ENCODE measurements at regions of chr2 and their contacts with region 1.

Region 1: GRCh38 chr2:46062637-46063412 is 234.4 kb upstream of the EPAS1 start:
- DNase-seq: peak; percentile 84
- H3K4me3 Mint-ChIP-seq: no peak overlapping the region
- H3K27ac Mint-ChIP-seq: no peak overlapping the region
- H3K4me1 Mint-ChIP-seq: peaks cover 18% of the 10 kb centered on the region
- H3K27me3 Mint-ChIP-seq: no peaks in the 10 kb centered on the region
- CTCF ChIP-seq: peak; percentile 75

Region 2: DNA sequence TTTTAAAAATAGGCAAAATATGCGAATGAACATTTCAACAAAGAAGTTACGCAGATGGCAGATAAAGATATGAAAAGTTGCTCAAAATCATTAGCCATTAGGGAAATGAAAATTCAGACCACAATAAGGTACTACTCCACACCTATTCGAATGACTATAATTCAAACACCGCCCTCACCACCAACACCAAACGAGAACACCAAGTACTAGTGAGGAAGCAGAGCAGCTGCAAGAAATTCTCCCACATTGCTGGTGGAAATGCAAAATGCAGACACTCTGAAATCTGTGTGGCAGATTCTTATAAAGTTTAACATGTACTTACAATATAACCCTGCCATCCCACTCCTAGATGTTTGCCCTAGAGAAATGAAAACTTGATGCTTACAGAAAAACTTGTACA is 428.6 kb before region 1 on chr2:
- CTCF ChIA-PET with region 1: no interaction called
- POLR2A ChIA-PET with region 1: no interaction called
- intact Hi-C with region 1: no loop called
- DNase-seq: no peak
- H3K4me3 Mint-ChIP-seq: no peak overlapping the region
- H3K27ac Mint-ChIP-seq: no peak overlapping the region
- H3K4me1 Mint-ChIP-seq: peaks cover 7% of the 10 kb centered on the region
- H3K27me3 Mint-ChIP-seq: no peaks in the 10 kb centered on the region
- CTCF ChIP-seq: no peak

Region 3: DNA sequence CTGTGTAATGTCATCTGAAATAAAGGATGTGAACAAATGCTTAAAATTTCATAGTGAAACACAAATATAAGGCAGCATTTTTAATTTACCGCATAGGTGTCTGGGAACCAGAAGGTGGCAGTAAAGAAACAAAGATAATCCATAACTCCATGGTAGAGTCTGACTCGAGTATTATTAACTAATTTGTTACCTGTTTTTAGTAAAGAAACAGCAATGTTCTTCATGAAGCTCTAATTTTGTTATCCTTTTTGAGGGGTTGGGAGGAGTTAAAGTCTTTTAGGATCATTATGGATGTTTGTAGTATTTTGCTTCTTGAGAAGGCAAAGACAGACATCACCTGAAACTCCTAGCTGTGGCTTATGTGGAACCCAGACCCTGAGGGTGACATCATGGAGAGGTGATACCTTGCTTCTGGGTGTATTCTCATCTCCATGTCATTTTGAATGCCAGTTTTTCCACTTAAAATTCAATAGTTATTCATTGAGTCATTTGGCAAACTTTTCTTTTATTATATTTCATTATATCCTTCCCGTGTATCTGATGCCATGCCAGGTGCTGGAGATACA is 51.8 kb before region 1 on chr2:
- CTCF ChIA-PET with region 1: interaction called, 8 read pairs
- POLR2A ChIA-PET with region 1: no interaction called
- intact Hi-C with region 1: loop called (anchors 5 kb)
- DNase-seq: peak; percentile 50
- H3K4me3 Mint-ChIP-seq: no peak overlapping the region
- H3K27ac Mint-ChIP-seq: no peak overlapping the region
- H3K4me1 Mint-ChIP-seq: no peaks in the 10 kb centered on the region
- H3K27me3 Mint-ChIP-seq: no peaks in the 10 kb centered on the region
- CTCF ChIP-seq: peak; percentile 54

Region 4: GRCh38 chr2:46073540-46074018 is 10.8 kb after region 1 on chr2:
- CTCF ChIA-PET with region 1: interaction called, 28 read pairs
- POLR2A ChIA-PET with region 1: no interaction called
- intact Hi-C with region 1: no loop called
- DNase-seq: peak; percentile 77
- H3K4me3 Mint-ChIP-seq: no peak overlapping the region
- H3K27ac Mint-ChIP-seq: peak overlapping the region; percentile 35
- H3K4me1 Mint-ChIP-seq: peaks cover 19% of the 10 kb centered on the region
- H3K27me3 Mint-ChIP-seq: no peaks in the 10 kb centered on the region
- CTCF ChIP-seq: no peak

Region 5: DNA sequence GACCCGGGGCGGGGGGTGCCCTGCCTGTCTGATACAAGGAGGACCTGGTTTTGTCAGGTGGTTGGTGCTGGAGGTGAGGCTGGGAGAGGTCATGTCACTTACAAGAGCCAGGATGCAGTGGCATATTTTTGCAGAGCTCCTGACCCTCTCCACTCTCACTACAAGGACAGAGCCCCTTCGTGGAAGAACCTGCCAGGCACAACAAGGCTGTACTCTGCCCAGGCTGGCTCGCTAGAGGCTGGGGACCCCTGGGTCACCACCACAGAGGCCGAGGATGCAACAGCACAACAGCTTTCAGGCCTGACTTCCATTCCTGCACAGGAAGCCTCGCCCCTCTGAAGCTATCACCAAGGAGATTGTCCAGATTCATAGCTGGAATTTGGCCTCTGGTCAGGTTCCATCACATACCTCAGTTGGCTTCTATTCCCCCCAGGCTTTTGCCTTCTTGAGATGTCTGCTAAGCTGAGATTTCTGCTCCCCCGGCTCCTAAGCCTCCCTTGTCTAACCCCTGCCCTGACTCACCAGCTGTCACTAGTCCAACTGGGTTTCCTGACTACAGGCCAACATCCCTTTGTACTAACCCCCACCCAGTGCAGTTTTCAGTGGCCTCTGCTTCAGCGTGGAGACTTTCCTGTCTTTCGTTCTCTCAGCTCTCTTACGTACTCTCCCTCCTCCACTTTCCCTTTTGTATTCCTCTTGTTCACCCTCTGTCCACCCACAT is 101.9 kb after region 1 on chr2:
- CTCF ChIA-PET with region 1: interaction called, 13 read pairs
- POLR2A ChIA-PET with region 1: interaction called, 4 read pairs
- intact Hi-C with region 1: no loop called
- DNase-seq: peak; percentile 94
- H3K4me3 Mint-ChIP-seq: no peak overlapping the region
- H3K27ac Mint-ChIP-seq: peak overlapping the region; percentile 32
- H3K4me1 Mint-ChIP-seq: peaks cover 35% of the 10 kb centered on the region
- H3K27me3 Mint-ChIP-seq: no peaks in the 10 kb centered on the region
- CTCF ChIP-seq: no peak

Region 6: GRCh38 chr2:46258937-46259776 is 196.3 kb after region 1 on chr2:
- CTCF ChIA-PET with region 1: no interaction called
- POLR2A ChIA-PET with region 1: no interaction called
- intact Hi-C with region 1: no loop called
- DNase-seq: no peak
- H3K4me3 Mint-ChIP-seq: no peak overlapping the region
- H3K27ac Mint-ChIP-seq: no peak overlapping the region
- H3K4me1 Mint-ChIP-seq: no peaks in the 10 kb centered on the region
- H3K27me3 Mint-ChIP-seq: no peaks in the 10 kb centered on the region
- CTCF ChIP-seq: no peak

Region 7: DNA sequence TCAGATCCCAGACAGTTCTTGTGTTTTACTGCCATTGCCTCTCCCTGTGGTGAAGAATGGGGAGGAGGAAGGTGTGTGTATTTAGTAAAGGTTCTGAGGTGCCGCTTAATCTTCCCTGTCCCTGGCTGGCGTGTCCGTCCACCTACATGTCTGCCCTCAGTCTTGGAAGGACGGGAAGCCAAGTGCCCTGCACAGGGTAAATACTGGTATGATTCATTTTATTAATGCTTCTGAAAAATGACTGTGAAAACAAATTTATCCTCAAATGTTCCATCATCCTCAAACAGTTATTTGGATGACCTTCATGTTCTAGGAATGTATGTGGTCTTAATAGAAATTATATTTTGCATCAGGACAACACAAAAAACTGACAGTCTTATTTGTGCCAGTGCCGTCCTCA is 241.0 kb after region 1 on chr2:
- CTCF ChIA-PET with region 1: interaction called, 12 read pairs
- POLR2A ChIA-PET with region 1: interaction called, 3 read pairs
- intact Hi-C with region 1: loop called (anchors 1 kb)
- DNase-seq: no peak
- H3K4me3 Mint-ChIP-seq: no peak overlapping the region
- H3K27ac Mint-ChIP-seq: peak overlapping the region; percentile 59
- H3K4me1 Mint-ChIP-seq: peaks cover 40% of the 10 kb centered on the region
- H3K27me3 Mint-ChIP-seq: no peaks in the 10 kb centered on the region
- CTCF ChIP-seq: no peak

Region 8: DNA sequence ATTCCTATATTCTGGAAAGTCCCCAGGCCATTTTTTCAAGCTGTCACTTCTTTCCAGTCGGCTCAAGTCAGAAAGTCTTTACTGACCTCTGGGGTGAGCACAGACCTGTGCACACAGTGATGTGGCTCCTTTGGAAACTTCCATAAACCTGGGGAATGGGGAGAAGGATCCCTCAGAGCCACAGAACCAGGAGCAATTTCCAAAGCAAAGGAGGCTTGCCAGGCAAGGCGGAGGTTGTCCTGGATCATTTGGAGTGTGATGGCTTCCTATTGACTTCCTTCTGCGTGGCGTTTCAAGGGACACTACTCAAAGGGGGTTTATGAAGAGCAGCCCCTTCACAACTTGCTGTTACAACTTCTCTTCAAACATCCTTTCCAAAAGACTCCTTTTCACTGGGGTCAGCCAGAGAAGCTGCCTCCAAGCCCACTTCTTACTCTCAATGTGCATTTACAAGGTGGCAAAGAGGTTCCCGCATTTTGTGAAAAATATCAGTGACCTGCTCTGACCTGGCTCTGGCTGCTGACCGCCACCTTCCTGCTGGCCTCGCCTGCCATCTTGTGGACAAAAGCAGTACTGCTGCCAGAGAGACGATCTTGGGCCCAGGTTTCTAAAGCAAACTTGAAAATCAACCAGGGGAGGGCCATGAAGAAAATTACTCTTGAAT is 398.3 kb after region 1 on chr2:
- CTCF ChIA-PET with region 1: interaction called, 10 read pairs
- POLR2A ChIA-PET with region 1: interaction called, 3 read pairs
- intact Hi-C with region 1: loop called (anchors 1 kb)
- DNase-seq: peak; percentile 68
- H3K4me3 Mint-ChIP-seq: no peak overlapping the region
- H3K27ac Mint-ChIP-seq: peak overlapping the region; percentile 33
- H3K4me1 Mint-ChIP-seq: peaks cover 6% of the 10 kb centered on the region
- H3K27me3 Mint-ChIP-seq: no peaks in the 10 kb centered on the region
- CTCF ChIP-seq: peak; percentile 99

Measured in MCF 10A (cell line).